CD8-positive, alpha-beta T cell (primary cell): ENCODE measurements at regions of chr1 and their contacts with region 1.

Region 1: DNA sequence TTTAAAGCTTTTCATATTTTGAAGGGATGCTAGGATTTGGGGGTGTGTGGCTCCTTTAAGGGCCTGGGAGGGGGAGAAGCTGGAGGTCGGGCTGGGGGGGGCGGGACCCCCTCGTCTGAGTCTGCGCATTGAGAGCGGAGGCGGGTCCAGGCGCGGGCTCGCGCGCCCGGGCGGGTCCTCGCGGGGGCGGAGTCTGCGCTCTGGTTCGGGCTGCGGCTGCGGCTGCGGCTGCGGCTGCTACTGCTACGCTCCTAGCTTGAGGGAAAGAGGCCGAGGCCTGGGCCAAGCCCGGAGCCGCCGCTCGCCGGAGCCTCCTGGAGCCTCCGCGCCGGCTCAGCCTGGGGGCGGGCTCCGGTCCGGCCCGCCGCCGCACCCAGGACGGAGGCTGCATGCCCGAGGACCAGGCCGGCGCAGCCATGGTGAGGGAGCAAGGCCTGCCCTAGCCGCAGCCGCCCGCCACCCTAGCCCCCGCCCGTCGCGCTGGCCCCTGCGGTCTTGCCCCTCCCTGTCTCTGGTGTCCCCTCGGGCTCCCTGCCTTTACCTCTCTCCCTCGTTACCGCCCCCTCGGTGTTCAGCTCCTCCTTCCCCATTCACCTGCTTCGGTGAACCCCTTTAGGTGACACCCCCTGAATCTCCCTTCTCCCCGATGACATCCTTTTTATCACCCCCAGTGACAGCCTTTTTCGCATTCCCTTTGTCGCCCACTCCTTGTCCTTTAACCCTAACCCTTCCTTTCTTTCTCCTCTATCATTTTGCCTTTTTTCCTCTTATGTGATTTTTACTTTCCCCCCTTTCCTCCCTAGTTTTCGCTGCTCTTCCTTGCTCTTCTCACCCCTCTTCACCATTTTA is at the start of gene ZYG11B:
- DNase-seq: peak; percentile 80 to 95 (median 89)
- ATAC-seq: peak; percentile 89
- H3K4me3 ChIP-seq: peak within 1 kb of the TSS; percentile 56 to 72
- H3K4me3 Mint-ChIP-seq: peak within 1 kb of the TSS; percentile 90
- H3K27ac ChIP-seq: peak within 1 kb of the TSS; percentile 37 to 48
- H3K27ac Mint-ChIP-seq: peak within 1 kb of the TSS; percentile 84
- H3K4me1 ChIP-seq: peaks cover 16% of the 10 kb centered on the region
- H3K4me1 Mint-ChIP-seq: peaks cover 42% of the 10 kb centered on the region
- H3K27me3 ChIP-seq: peaks cover 0 to 3% of the 10 kb centered on the region in 2 experiments
- H3K27me3 Mint-ChIP-seq: peaks cover 3% of the 10 kb centered on the region
- CTCF ChIP-seq: no peak
- total RNA-seq, gene ZYG11B: 9.8 to 10.4 TPM

Region 2: GRCh38 chr1:51519048-51519864 is 1207.2 kb before region 1 on chr1 and contains the start of gene EPS15:
- CTCF ChIA-PET with region 1: no interaction called
- POLR2A ChIA-PET with region 1: no interaction called
- intact Hi-C with region 1: loop called in 1 of 2 experiments (anchors 2 kb)
- DNase-seq: peak; percentile 70 to 90 (median 83)
- ATAC-seq: peak; percentile 65
- H3K4me3 ChIP-seq: peak within 1 kb of the TSS; percentile 76 to 82
- H3K4me3 Mint-ChIP-seq: peak within 1 kb of the TSS; percentile 94
- H3K27ac ChIP-seq: peak within 1 kb of the TSS; percentile 47 to 81
- H3K27ac Mint-ChIP-seq: peak within 1 kb of the TSS; percentile 93
- H3K4me1 ChIP-seq: peaks cover 38% of the 10 kb centered on the region
- H3K4me1 Mint-ChIP-seq: peaks cover 57% of the 10 kb centered on the region
- H3K27me3 ChIP-seq: no peaks in the 10 kb centered on the region
- H3K27me3 Mint-ChIP-seq: no peaks in the 10 kb centered on the region
- CTCF ChIP-seq: no peak
- total RNA-seq, gene EPS15: 49.9 to 52.2 TPM

Region 3: DNA sequence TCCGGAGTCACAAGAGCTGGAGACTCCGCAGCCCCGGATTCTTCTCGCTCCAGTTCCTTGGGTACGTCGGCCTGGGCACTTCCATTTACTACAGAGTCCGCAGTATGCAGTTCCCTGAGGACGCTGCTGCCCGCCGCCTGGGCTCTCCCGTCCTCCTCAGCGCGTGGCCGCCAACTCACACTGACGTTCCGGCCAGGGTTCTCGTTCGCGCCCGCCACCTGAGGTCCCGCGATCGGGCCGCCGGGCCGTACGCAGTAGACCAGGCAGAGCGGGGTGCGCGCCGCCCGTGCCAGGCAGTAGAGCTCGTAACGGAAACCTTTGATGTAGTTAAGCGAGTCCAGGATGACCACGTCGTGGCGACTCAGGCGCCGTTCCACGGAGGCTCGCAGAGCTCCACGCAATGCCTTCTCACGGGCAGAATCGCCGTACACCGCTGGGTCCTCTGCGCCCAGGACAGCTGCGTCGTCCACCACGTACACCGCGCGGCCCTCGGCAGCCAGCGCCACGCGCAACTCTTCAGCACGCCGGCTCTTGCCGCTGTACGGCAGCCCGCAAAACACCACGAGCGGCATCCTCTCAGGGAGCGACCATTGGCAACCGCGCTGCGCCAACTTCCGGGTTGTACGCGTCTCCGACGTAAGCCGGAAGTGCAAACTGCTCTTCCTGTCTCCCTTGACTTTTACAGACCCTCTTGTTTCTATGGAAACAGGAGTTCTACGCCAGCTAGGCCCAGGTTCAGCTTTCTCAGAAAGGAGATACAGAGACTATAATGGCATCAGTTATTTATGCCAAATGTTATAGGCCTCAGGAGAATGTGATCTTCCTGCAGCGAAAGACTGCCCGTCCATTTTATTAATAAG is 693.1 kb before region 1 on chr1 and contains the start of gene KTI12:
- CTCF ChIA-PET with region 1: no interaction called
- POLR2A ChIA-PET with region 1: no interaction called
- intact Hi-C with region 1: loop called in 1 of 2 experiments (anchors 5 kb)
- DNase-seq: peak; percentile 78 to 97 (median 88)
- ATAC-seq: peak; percentile 92
- H3K4me3 ChIP-seq: peak within 1 kb of the TSS; percentile 78 to 80
- H3K4me3 Mint-ChIP-seq: peak within 1 kb of the TSS; percentile 92
- H3K27ac ChIP-seq: peak within 1 kb of the TSS; percentile 88 to 89
- H3K27ac Mint-ChIP-seq: peak within 1 kb of the TSS; percentile 95
- H3K4me1 ChIP-seq: peaks cover 30% of the 10 kb centered on the region
- H3K4me1 Mint-ChIP-seq: peaks cover 38% of the 10 kb centered on the region
- H3K27me3 ChIP-seq: no peaks in the 10 kb centered on the region
- H3K27me3 Mint-ChIP-seq: no peaks in the 10 kb centered on the region
- CTCF ChIP-seq: no peak
- total RNA-seq, gene KTI12: 23.6 to 24.7 TPM

Region 4: DNA sequence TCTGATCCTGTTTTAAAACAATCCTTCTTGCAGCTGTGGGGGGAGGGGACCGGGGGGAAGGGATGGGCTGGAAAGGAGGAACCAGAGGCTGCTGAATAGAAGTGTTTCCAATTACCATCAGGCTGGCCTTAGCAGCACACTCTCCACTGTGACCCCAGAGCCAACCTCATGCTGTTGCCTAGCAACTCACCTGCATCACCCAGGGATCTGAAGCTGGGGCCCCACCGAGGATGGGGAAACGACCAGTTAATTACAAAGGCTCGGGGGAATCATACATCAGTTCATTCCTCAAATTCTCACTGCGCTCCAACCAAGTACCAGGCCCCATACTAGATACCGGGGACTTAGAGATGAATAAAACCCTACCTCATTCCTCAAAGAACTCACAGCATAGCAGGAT is 136.2 kb before region 1 on chr1:
- CTCF ChIA-PET with region 1: no interaction called
- POLR2A ChIA-PET with region 1: no interaction called
- intact Hi-C with region 1: no loop called
- DNase-seq: no peak
- ATAC-seq: no peak
- H3K4me3 ChIP-seq: no peak overlapping the region
- H3K4me3 Mint-ChIP-seq: no peak overlapping the region
- H3K27ac ChIP-seq: no peak overlapping the region
- H3K27ac Mint-ChIP-seq: no peak overlapping the region
- H3K4me1 ChIP-seq: no peaks in the 10 kb centered on the region
- H3K4me1 Mint-ChIP-seq: peaks cover 1% of the 10 kb centered on the region
- H3K27me3 ChIP-seq: no peaks in the 10 kb centered on the region
- H3K27me3 Mint-ChIP-seq: no peaks in the 10 kb centered on the region
- CTCF ChIP-seq: no peak

Region 5: DNA sequence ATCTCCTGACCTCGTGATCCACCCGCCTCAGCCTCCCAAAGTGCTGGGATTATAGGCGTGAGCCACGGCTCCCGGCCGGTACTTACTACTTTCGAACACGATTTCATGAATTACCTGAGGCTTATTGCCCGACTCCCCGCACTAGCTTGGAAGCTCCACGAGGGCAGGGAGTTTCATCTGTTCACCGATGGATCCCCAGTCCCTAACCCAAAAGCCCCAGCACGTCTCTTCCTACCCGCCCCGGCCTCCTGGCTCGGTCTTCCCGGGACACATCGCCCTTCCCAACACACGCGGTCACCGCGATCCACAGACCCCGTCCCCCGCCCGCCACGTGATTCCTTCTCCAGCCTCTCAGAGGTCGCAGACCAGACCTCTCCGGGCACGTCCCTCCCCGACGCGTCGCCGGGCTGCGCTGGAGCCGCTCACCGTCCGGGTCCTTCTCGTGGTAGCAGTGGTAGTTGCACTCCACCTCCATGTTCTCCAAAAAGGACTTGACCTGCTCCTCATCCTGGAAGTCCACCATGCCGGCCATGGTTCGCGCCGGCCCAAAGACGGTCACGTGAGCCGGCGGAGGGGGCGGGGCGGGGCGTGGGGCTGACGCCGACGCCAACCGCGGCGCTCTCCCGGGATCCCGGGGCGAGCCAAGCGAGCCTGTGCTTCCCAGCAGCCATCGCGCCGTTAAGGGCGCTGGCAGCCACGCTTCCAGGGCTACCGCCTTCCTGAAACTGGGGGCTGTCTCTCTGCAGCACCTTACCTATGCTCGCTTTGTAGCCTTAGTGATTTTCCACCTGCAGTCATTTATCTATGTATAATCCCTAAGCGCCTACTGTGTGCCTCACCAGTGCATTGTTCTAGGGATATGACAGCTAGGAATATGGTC is 28.5 kb before region 1 on chr1 and contains the start of gene COA7:
- CTCF ChIA-PET with region 1: no interaction called
- POLR2A ChIA-PET with region 1: interaction called, 27 read pairs
- intact Hi-C with region 1: loop called (anchors 1 kb)
- DNase-seq: peak; percentile 6 to 78 (median 54)
- ATAC-seq: peak; percentile 29
- H3K4me3 ChIP-seq: peak within 1 kb of the TSS; percentile 85 to 97
- H3K4me3 Mint-ChIP-seq: peak within 1 kb of the TSS; percentile 89
- H3K27ac ChIP-seq: peak within 1 kb of the TSS; percentile 58 to 74
- H3K27ac Mint-ChIP-seq: peak within 1 kb of the TSS; percentile 75
- H3K4me1 ChIP-seq: peaks cover 3% of the 10 kb centered on the region
- H3K4me1 Mint-ChIP-seq: peaks cover 24% of the 10 kb centered on the region
- H3K27me3 ChIP-seq: no peaks in the 10 kb centered on the region
- H3K27me3 Mint-ChIP-seq: no peaks in the 10 kb centered on the region
- CTCF ChIP-seq: no peak
- total RNA-seq, gene COA7: 0.94 to 1.8 TPM

Region 6: GRCh38 chr1:52920791-52921291 is 194.4 kb after region 1 on chr1:
- CTCF ChIA-PET with region 1: no interaction called
- POLR2A ChIA-PET with region 1: interaction called, 3 read pairs
- intact Hi-C with region 1: loop called in 1 of 2 experiments (anchors 5 kb)
- DNase-seq: peak in 1 of 9 experiments; percentile 33
- ATAC-seq: no peak
- H3K4me3 ChIP-seq: peak overlapping the region; percentile 18 to 60
- H3K4me3 Mint-ChIP-seq: peak overlapping the region; percentile 69
- H3K27ac ChIP-seq: peak overlapping the region; percentile 32 to 78
- H3K27ac Mint-ChIP-seq: peak overlapping the region; percentile 60
- H3K4me1 ChIP-seq: peaks cover 21% of the 10 kb centered on the region
- H3K4me1 Mint-ChIP-seq: peaks cover 31% of the 10 kb centered on the region
- H3K27me3 ChIP-seq: no peaks in the 10 kb centered on the region
- H3K27me3 Mint-ChIP-seq: no peaks in the 10 kb centered on the region
- CTCF ChIP-seq: no peak

Region 7: GRCh38 chr1:53326088-53326597 is 599.7 kb after region 1 on chr1:
- CTCF ChIA-PET with region 1: no interaction called
- POLR2A ChIA-PET with region 1: no interaction called
- intact Hi-C with region 1: loop called in 1 of 2 experiments (anchors 10 kb)
- DNase-seq: peak; percentile 78 to 94 (median 92)
- ATAC-seq: peak; percentile 89
- H3K4me3 ChIP-seq: peak overlapping the region; percentile 74 to 82
- H3K4me3 Mint-ChIP-seq: peak overlapping the region; percentile 94
- H3K27ac ChIP-seq: peak overlapping the region; percentile 26 to 66
- H3K27ac Mint-ChIP-seq: peak overlapping the region; percentile 77
- H3K4me1 ChIP-seq: peaks cover 6% of the 10 kb centered on the region
- H3K4me1 Mint-ChIP-seq: peaks cover 16% of the 10 kb centered on the region
- H3K27me3 ChIP-seq: no peaks in the 10 kb centered on the region
- H3K27me3 Mint-ChIP-seq: no peaks in the 10 kb centered on the region
- CTCF ChIP-seq: no peak